CD4-positive, alpha-beta memory T cell (primary cell): ENCODE measurements at regions of chrX and their contacts with region 1.

Region 1: DNA sequence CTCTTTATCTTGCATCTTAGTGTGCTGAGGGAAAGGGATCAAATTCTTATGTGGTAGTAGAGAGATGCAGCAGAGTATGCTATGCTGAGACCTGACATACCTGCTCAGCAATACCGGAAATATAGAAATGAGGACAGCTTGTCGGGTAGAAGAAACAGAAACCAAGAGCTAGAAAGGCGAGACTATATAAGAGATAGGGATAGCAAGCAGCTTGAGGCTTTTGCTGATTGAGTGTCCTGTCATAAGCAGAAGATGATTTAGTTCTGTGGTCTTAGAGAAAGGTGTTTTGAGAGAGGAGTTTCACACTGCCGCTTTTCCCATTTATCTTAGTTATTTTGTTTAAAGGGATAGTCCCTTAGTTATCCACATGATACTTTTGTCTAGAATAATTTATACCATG is 31.7 kb downstream of the USP9X start:
- DNase-seq: peak; percentile 44 to 57 (median 50)
- H3K4me3 ChIP-seq: no peak overlapping the region
- H3K4me3 Mint-ChIP-seq: peak overlapping the region; percentile 46 to 80 (median 62)
- H3K27ac ChIP-seq: peak overlapping the region; percentile 26
- H3K27ac Mint-ChIP-seq: peak overlapping the region; percentile 2 to 90 (median 59)
- H3K4me1 ChIP-seq: peaks cover 82% of the 10 kb centered on the region
- H3K4me1 Mint-ChIP-seq: peaks cover 45 to 81% (median 63%) of the 10 kb centered on the region in 4 donors
- H3K27me3 ChIP-seq: no peaks in the 10 kb centered on the region
- H3K27me3 Mint-ChIP-seq: no peaks in the 10 kb centered on the region

Region 2: GRCh38 chrX:40792433-40792832 is 324.5 kb before region 1 on chrX:
- CTCF ChIA-PET with region 1: interaction called, 4 read pairs
- POLR2A ChIA-PET with region 1: no interaction called
- intact Hi-C with region 1: loop called (anchors 2 kb)
- DNase-seq: no peak
- H3K4me3 ChIP-seq: no peak overlapping the region
- H3K4me3 Mint-ChIP-seq: no peak overlapping the region
- H3K27ac ChIP-seq: no peak overlapping the region
- H3K27ac Mint-ChIP-seq: no peak overlapping the region
- H3K4me1 ChIP-seq: no peaks in the 10 kb centered on the region
- H3K4me1 Mint-ChIP-seq: peaks cover 0 to 7% (median 3%) of the 10 kb centered on the region in 4 donors
- H3K27me3 ChIP-seq: no peaks in the 10 kb centered on the region
- H3K27me3 Mint-ChIP-seq: peaks cover 3 to 4% of the 10 kb centered on the region in 2 donors

Region 3: GRCh38 chrX:40877887-40878286 is 239.1 kb before region 1 on chrX:
- CTCF ChIA-PET with region 1: interaction called, 111 read pairs
- POLR2A ChIA-PET with region 1: interaction called, 11 read pairs
- intact Hi-C with region 1: loop called (anchors 1 kb)
- DNase-seq: peak; percentile 32 to 43 (median 40)
- H3K4me3 ChIP-seq: no peak overlapping the region
- H3K4me3 Mint-ChIP-seq: peak overlapping the region in 1 of 8 donors; percentile 3
- H3K27ac ChIP-seq: no peak overlapping the region
- H3K27ac Mint-ChIP-seq: no peak overlapping the region
- H3K4me1 ChIP-seq: peaks cover 4% of the 10 kb centered on the region
- H3K4me1 Mint-ChIP-seq: peaks cover 0 to 4% (median 0%) of the 10 kb centered on the region in 4 donors
- H3K27me3 ChIP-seq: no peaks in the 10 kb centered on the region
- H3K27me3 Mint-ChIP-seq: no peaks in the 10 kb centered on the region

Region 4: GRCh38 chrX:40933132-40933705 is 183.7 kb before region 1 on chrX:
- CTCF ChIA-PET with region 1: interaction called, 3 read pairs
- POLR2A ChIA-PET with region 1: no interaction called
- intact Hi-C with region 1: loop called (anchors 5 kb)
- DNase-seq: peak; percentile 26 to 54 (median 28)
- H3K4me3 ChIP-seq: peak overlapping the region in 1 of 2 donors; percentile 18
- H3K4me3 Mint-ChIP-seq: peak overlapping the region; percentile 81 to 91 (median 88)
- H3K27ac ChIP-seq: peak overlapping the region; percentile 38
- H3K27ac Mint-ChIP-seq: peak overlapping the region; percentile 77 to 96 (median 89)
- H3K4me1 ChIP-seq: peaks cover 16% of the 10 kb centered on the region
- H3K4me1 Mint-ChIP-seq: peaks cover 11 to 24% (median 15%) of the 10 kb centered on the region in 4 donors
- H3K27me3 ChIP-seq: no peaks in the 10 kb centered on the region
- H3K27me3 Mint-ChIP-seq: no peaks in the 10 kb centered on the region

Region 5: DNA sequence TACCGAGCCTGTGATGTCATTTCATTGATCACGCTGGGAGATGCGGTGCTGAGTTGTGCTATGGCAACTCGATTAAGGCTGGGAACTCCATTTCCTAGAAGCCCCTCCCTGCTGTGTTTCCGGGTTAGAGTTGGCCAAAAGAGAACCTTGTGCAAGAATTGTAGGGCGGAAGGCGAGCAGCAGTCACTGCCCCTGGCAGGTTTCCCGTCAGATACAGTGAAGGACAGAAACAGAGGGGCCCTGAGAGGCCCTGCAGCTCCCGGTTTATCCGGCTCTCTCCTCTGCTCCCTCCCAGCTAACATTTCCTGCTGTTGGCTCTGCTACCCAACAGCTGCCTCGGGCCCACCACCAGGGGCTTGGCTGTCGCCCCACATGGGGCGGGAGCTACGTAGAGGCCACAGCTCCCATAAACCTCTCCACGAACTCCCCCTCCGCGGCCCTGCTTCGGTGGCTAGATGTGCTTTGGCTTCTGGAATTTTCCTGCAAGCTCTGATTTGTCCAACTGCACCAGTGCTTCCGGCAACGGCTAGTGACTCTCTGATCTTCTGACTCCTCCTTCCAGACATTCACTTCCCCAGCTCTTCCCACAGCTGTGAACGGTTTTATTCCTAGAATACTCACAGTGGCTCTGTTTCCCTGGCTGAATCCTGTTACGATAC is 106.6 kb before region 1 on chrX:
- CTCF ChIA-PET with region 1: interaction called, 10 read pairs
- POLR2A ChIA-PET with region 1: interaction called, 6 read pairs
- intact Hi-C with region 1: loop called (anchors 5 kb)
- DNase-seq: peak; percentile 51 to 73 (median 59)
- H3K4me3 ChIP-seq: peak overlapping the region; percentile 34 to 66
- H3K4me3 Mint-ChIP-seq: peak overlapping the region; percentile 66 to 83 (median 81)
- H3K27ac ChIP-seq: peak overlapping the region; percentile 20
- H3K27ac Mint-ChIP-seq: peak overlapping the region; percentile 62 to 92 (median 86)
- H3K4me1 ChIP-seq: peaks cover 13% of the 10 kb centered on the region
- H3K4me1 Mint-ChIP-seq: peaks cover 9 to 15% (median 12%) of the 10 kb centered on the region in 4 donors
- H3K27me3 ChIP-seq: no peaks in the 10 kb centered on the region
- H3K27me3 Mint-ChIP-seq: no peaks in the 10 kb centered on the region

Region 6: GRCh38 chrX:41055740-41056139 is 61.2 kb before region 1 on chrX:
- CTCF ChIA-PET with region 1: no interaction called
- POLR2A ChIA-PET with region 1: no interaction called
- intact Hi-C with region 1: no loop called
- DNase-seq: no peak
- H3K4me3 ChIP-seq: no peak overlapping the region
- H3K4me3 Mint-ChIP-seq: no peak overlapping the region
- H3K27ac ChIP-seq: no peak overlapping the region
- H3K27ac Mint-ChIP-seq: no peak overlapping the region
- H3K4me1 ChIP-seq: no peaks in the 10 kb centered on the region
- H3K4me1 Mint-ChIP-seq: no peaks in the 10 kb centered on the region
- H3K27me3 ChIP-seq: no peaks in the 10 kb centered on the region
- H3K27me3 Mint-ChIP-seq: peaks cover 0 to 3% of the 10 kb centered on the region in 2 donors